Transverse colon (tissue), 4 donors: ENCODE measurements at regions of chr11 and their contacts with region 1.

Region 1: GRCh38 chr11:109677876-109678275 is 255.9 kb downstream of the C11orf87 start:
- DNase-seq: no peak
- H3K4me3 ChIP-seq: no peak overlapping the region
- H3K27ac ChIP-seq: no peak overlapping the region
- H3K4me1 ChIP-seq: no peaks in the 10 kb centered on the region
- H3K27me3 ChIP-seq: no peaks in the 10 kb centered on the region
- CTCF ChIP-seq: no peak
- EP300 ChIP-seq: no peak
- POLR2A ChIP-seq: no peak

Region 2: DNA sequence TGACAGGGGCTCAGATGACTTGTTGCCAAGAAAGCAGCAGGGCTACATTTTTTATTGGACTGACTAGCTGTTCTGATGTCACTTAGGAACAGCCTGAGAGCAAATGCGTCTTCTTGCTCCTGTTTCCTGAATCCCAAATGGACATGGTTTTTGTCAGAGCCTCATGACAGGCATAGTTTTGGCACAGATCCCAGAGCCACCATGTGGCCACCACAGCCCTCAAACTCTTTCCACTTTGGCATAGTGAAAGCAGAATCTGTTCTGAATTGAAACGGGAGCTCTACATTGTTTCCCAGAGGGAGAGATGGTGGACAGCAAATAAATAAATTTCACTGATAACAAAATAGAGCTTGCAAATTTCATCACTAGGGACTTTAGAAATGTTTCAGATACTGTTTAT is 33.7 kb before region 1 on chr11:
- in situ Hi-C with region 1: no loop called
- intact Hi-C with region 1: no loop called
- DNase-seq: no peak
- H3K4me3 ChIP-seq: no peak overlapping the region
- H3K27ac ChIP-seq: no peak overlapping the region
- H3K4me1 ChIP-seq: no peaks in the 10 kb centered on the region
- H3K27me3 ChIP-seq: no peaks in the 10 kb centered on the region
- CTCF ChIP-seq: no peak
- EP300 ChIP-seq: no peak
- POLR2A ChIP-seq: no peak

Region 3: GRCh38 chr11:109658190-109658589 is 19.7 kb before region 1 on chr11:
- in situ Hi-C with region 1: no loop called
- intact Hi-C with region 1: loop called (anchors 1 kb)
- DNase-seq: no peak
- H3K4me3 ChIP-seq: no peak overlapping the region
- H3K27ac ChIP-seq: no peak overlapping the region
- H3K4me1 ChIP-seq: no peaks in the 10 kb centered on the region
- H3K27me3 ChIP-seq: no peaks in the 10 kb centered on the region
- CTCF ChIP-seq: no peak
- EP300 ChIP-seq: no peak
- POLR2A ChIP-seq: no peak

Region 4: DNA sequence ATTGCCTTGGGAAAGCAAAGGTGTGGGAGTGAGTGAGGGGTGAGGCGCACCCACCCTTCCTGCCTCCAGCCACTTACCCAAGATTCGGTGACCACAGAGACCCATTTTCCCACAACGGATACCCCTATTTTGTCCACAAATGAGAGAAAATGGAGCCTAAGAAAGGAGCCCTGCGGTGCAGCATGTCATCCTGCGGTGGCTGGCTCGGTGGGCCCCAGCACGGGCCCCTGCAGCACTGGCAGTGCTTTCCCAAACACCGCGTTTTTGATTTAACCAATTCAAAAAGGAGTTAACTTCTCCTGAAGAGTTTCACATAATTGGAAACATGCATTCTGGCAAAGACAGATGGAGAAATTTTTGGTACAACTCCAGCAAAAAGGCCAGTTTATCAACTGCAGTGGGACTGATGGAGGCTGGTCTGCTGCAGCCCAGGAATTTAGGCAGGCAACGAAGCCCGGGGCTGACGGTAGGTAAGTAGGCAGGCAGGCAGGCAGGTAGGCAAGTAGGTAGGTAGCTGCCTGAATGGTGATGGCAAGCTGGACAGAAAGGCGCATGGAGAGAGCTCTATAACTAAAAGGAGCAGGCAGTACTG is 836.1 kb after region 1 on chr11:
- in situ Hi-C with region 1: no loop called
- intact Hi-C with region 1: loop called (anchors 5 kb)
- DNase-seq: no peak
- H3K4me3 ChIP-seq: no peak overlapping the region
- H3K27ac ChIP-seq: no peak overlapping the region
- H3K4me1 ChIP-seq: no peaks in the 10 kb centered on the region
- H3K27me3 ChIP-seq: no peaks in the 10 kb centered on the region
- CTCF ChIP-seq: no peak
- EP300 ChIP-seq: no peak
- POLR2A ChIP-seq: no peak